Activated B cell treated with CpG ODN at 0.5 μM for 24 hours (primary cell): ENCODE measurements at regions of chr9 and their contacts with region 1.

Region 1: GRCh38 chr9:124771021-124771866 is at the start of gene NR6A1:
- DNase-seq: peak; percentile 94
- ATAC-seq: peak; percentile 90
- H3K4me3 Mint-ChIP-seq: peak within 1 kb of the TSS; percentile 90
- H3K27ac Mint-ChIP-seq: peak within 1 kb of the TSS; percentile 89
- H3K4me1 Mint-ChIP-seq: peaks cover 38% of the 10 kb centered on the region
- H3K27me3 Mint-ChIP-seq: peaks cover 40% of the 10 kb centered on the region
- CTCF ChIP-seq: no peak
- total RNA-seq, gene NR6A1: 2.3 and 3.1 TPM in 2 replicates

Region 2: DNA sequence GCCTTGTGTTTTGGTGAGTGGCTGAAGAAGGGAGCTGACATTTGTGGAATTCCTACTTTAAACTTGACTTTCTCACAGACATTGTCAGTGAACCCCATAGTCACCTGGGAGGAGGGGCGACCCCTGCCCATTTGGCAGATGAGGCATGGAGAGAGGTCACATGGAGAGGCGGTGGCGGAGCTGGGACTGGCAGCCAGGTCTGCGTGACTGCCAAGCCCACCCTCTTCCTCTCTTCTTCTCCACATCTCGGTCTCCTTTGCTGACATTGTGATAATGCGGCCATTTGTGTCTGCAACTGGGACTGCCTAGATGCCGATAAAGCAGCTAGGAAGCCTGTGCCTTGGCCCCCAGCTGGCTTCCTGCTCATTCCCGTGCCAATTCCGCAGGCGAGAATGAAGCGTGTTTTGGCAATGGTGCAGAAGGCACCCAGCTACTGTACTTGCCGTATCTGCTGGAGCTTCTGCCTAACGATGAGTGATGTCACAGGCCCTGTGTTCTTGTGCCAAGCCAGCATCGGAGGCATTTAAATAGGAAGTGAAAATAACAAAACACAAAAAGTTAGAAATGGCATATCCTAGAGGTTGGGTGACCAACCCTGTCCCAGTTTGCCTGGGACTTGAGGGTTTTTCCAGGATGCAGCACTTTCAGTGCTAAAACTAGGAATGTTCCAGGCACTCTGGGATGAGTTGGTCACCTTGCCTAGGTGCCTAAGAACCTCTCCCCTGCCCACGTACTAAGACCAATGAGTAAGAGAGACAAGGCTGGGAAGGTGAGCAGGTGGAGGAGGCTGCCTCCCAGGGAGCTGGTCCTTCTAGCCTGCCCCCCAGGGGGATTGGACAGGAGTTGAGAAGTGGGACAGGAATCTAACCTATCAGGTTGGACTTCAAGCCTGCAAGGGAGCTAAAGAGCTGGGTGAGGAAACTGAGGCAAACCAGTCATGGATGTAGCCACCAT is 29.3 kb after region 1 on chr9:
- CTCF ChIA-PET with region 1: interaction called, 14 read pairs
- POLR2A ChIA-PET with region 1: interaction called, 4 read pairs
- intact Hi-C with region 1: loop called (anchors 1 kb)
- DNase-seq: peak; percentile 30
- ATAC-seq: peak; percentile 95
- H3K4me3 Mint-ChIP-seq: peak overlapping the region; percentile 64
- H3K27ac Mint-ChIP-seq: peak overlapping the region; percentile 94
- H3K4me1 Mint-ChIP-seq: peaks cover 40% of the 10 kb centered on the region
- H3K27me3 Mint-ChIP-seq: no peaks in the 10 kb centered on the region
- CTCF ChIP-seq: no peak

Region 3: DNA sequence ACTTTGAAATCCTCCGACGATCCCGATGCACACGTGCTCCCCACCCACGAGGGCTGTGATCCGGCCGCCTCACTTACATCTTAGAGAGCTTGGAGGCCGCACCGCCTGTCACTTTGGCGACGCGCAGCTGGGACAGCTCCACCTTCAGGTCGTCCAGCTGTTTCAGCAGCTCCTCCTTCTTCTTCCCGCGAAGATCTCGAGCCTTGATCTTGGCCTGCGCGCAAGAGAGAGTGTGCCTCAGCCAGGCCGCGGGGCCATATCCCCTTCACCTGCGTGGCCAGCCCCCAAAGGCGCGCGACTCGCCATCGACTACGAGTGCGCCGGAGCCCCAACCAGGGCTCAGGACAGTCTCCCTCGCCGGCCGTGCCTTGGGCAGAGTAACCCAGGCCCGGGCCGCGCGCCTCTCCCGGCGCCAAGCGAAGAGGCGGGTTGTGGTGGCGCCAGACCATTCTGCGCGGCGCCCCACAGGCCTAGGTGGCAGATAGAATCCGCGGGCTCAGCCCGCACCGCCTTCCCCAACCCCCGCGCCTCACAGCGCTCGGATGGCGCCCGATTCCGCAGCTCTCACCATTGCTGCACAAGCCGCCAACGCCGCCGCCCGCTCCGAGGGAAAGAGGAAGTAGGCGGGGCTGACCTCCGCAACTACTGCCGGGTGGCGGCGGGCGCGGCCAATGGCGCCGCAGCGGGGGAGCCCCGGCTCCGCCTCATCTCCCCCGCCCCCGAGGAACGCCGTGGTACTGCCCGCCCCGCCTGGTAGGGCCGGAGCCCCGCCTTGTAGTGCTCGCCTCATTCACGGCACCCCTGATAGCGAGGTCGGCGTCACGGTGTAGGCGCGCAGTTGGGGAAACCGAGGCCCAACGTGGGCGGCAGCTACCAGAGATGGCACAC is 90.3 kb after region 1 on chr9 and contains the starts of genes ARPC5L and RPL35:
- CTCF ChIA-PET with region 1: interaction called, 216 read pairs
- POLR2A ChIA-PET with region 1: interaction called, 23 read pairs
- intact Hi-C with region 1: loop called (anchors 2 kb)
- DNase-seq: peak; percentile 92
- ATAC-seq: peak; percentile 95
- H3K4me3 Mint-ChIP-seq: peak within 1 kb of the TSS; percentile 95
- H3K27ac Mint-ChIP-seq: peak within 1 kb of the TSS; percentile 94
- H3K4me1 Mint-ChIP-seq: peaks cover 47% of the 10 kb centered on the region
- H3K27me3 Mint-ChIP-seq: no peaks in the 10 kb centered on the region
- CTCF ChIP-seq: no peak
- total RNA-seq, gene ARPC5L: 91.5 and 93.1 TPM in 2 replicates
- total RNA-seq, gene RPL35: 2,037 and 2,426 TPM in 2 replicates

Region 4: DNA sequence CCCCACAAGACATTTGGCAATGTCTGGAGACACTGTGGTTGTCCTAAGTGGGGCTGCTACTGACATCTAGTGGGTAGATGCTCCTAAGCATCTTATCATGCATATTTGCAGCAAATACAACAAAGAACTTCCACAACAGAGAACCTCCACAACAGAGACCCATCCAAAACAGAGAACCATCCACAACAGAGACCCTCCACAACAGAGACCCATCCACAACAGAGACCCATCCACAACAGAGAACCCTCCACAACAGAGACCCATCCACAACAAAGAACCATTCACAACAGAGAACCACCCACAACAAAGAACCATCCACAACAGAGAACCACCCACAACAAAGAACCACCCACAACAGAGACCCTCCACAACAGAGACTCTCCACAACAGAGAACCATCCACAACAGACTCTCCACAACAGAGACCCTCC is 123.5 kb after region 1 on chr9:
- CTCF ChIA-PET with region 1: interaction called, 31 read pairs
- POLR2A ChIA-PET with region 1: interaction called, 4 read pairs
- intact Hi-C with region 1: loop called (anchors 1 kb)
- DNase-seq: no peak
- ATAC-seq: peak; percentile 85
- H3K4me3 Mint-ChIP-seq: no peak overlapping the region
- H3K27ac Mint-ChIP-seq: peak overlapping the region; percentile 50
- H3K4me1 Mint-ChIP-seq: no peaks in the 10 kb centered on the region
- H3K27me3 Mint-ChIP-seq: no peaks in the 10 kb centered on the region
- CTCF ChIP-seq: no peak

Region 5: GRCh38 chr9:125143375-125144090 is 372.3 kb after region 1 on chr9 and contains the start of gene SCAI:
- CTCF ChIA-PET with region 1: interaction called, 18 read pairs
- POLR2A ChIA-PET with region 1: no interaction called
- intact Hi-C with region 1: loop called (anchors 1 kb)
- DNase-seq: peak; percentile 90
- ATAC-seq: peak; percentile 99
- H3K4me3 Mint-ChIP-seq: peak within 1 kb of the TSS; percentile 92
- H3K27ac Mint-ChIP-seq: peak within 1 kb of the TSS; percentile 36
- H3K4me1 Mint-ChIP-seq: peaks cover 22% of the 10 kb centered on the region
- H3K27me3 Mint-ChIP-seq: no peaks in the 10 kb centered on the region
- CTCF ChIP-seq: peak; percentile 91
- total RNA-seq, gene SCAI: 10.7 and 11.7 TPM in 2 replicates

Region 6: GRCh38 chr9:125200210-125201047 is 429.2 kb after region 1 on chr9 and contains the start of gene RABEPK:
- CTCF ChIA-PET with region 1: no interaction called
- POLR2A ChIA-PET with region 1: no interaction called
- intact Hi-C with region 1: loop called (anchors 2 kb)
- DNase-seq: peak; percentile 95
- ATAC-seq: peak; percentile 98
- H3K4me3 Mint-ChIP-seq: peak within 1 kb of the TSS; percentile 94
- H3K27ac Mint-ChIP-seq: peak within 1 kb of the TSS; percentile 92
- H3K4me1 Mint-ChIP-seq: peaks cover 13% of the 10 kb centered on the region
- H3K27me3 Mint-ChIP-seq: no peaks in the 10 kb centered on the region
- CTCF ChIP-seq: no peak
- total RNA-seq, gene RABEPK: 19.1 and 19.4 TPM in 2 replicates

Region 7: DNA sequence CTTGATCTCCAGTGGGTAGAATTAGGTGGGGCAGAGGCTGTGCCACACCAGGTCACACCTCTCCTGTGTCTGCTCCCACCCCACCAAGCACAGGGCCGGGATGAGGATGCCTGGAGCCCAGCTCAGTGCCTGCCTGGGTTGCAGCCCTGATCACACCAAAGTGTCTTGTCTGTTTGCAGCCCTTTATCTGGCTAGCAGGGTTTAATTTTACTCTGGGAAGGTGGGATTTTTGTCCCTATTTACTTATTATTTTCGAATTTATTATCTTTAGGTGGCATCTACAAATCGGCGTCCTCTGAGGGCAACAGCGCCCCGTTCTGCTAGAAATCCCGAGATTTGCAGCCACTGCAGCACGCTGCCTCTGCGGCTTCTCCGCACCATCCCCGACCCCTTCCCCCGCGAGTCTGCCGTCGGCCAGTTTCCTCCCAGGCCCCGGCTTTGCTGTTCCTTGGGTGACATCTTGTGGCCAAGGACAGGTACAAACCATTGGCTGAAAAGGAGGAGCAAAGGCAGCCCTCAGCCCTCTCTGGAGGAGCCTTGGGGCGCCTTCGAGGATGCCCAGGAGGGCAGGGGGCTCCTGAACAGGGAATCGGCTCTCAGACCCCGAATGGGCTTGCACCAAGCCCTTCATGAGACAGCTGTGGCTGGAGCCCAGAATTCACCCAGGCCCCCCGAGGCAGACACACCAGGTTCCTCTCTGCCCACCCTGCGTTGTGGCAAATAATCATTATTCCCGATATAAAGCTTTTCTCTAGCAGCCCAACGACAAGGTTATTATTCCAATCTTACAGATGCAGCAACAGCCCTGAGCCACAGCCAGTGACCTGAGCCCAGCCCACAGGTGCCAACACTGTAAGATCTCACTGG is 603.4 kb after region 1 on chr9:
- CTCF ChIA-PET with region 1: no interaction called
- POLR2A ChIA-PET with region 1: no interaction called
- intact Hi-C with region 1: loop called (anchors 1 kb)
- DNase-seq: peak; percentile 43
- ATAC-seq: peak; percentile 95
- H3K4me3 Mint-ChIP-seq: peak overlapping the region; percentile 32
- H3K27ac Mint-ChIP-seq: no peak overlapping the region
- H3K4me1 Mint-ChIP-seq: peaks cover 4% of the 10 kb centered on the region
- H3K27me3 Mint-ChIP-seq: peaks cover 4% of the 10 kb centered on the region
- CTCF ChIP-seq: no peak